Activated T-helper 1 cell treated with anti-CD3 and anti-CD28 coated beads, Interleukin-12 subunit alpha, Interleukin-12 subunit beta, Interleukin-2, Interleukin-4 antibody, amounts not matched to agents 30 ng/mL and 10 ng/mL and 1 ng/mL, durations not matched to agents 14 hours and 24 hours and 36 hours (primary cell): ENCODE measurements at regions of chr10 and their contacts with region 1.

Region 1: GRCh38 chr10:3623746-3624145 is 161.3 kb downstream of the KLF6 start:
- DNase-seq: no peak
- H3K4me3 Mint-ChIP-seq: no peak overlapping the region
- H3K27ac Mint-ChIP-seq: peak overlapping the region; percentile 89
- H3K4me1 Mint-ChIP-seq: peaks cover 35% of the 10 kb centered on the region
- H3K27me3 Mint-ChIP-seq: peaks cover 8% of the 10 kb centered on the region

Region 2: DNA sequence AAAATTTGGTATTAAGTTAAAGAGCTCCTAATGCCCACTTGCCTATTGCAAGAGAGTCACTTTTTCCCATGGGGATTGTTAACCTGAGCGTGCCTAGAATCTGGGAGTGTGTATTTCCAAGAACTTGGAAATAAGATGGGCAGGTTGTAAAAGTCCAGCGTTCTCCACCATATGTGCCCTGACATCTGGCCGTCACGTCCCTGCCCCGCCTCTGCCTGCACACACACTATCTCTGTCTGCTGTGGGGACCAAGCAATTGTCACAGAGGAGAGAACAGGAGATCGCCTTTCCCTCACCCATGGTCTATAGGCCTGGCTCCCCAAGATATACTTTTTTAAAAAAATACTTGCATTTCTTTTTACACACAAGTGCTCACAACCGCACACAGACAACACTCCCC is 952.9 kb before region 1 on chr10:
- intact Hi-C with region 1: no loop called
- DNase-seq: no peak
- H3K4me3 Mint-ChIP-seq: no peak overlapping the region
- H3K27ac Mint-ChIP-seq: no peak overlapping the region
- H3K4me1 Mint-ChIP-seq: no peaks in the 10 kb centered on the region
- H3K27me3 Mint-ChIP-seq: no peaks in the 10 kb centered on the region

Region 3: GRCh38 chr10:3197348-3198003 is 426.3 kb before region 1 on chr10:
- intact Hi-C with region 1: loop called (anchors 1 kb)
- DNase-seq: peak; percentile 76
- H3K4me3 Mint-ChIP-seq: peak overlapping the region; percentile 37
- H3K27ac Mint-ChIP-seq: peak overlapping the region; percentile 57
- H3K4me1 Mint-ChIP-seq: peaks cover 24% of the 10 kb centered on the region
- H3K27me3 Mint-ChIP-seq: peaks cover 82% of the 10 kb centered on the region

Region 4: DNA sequence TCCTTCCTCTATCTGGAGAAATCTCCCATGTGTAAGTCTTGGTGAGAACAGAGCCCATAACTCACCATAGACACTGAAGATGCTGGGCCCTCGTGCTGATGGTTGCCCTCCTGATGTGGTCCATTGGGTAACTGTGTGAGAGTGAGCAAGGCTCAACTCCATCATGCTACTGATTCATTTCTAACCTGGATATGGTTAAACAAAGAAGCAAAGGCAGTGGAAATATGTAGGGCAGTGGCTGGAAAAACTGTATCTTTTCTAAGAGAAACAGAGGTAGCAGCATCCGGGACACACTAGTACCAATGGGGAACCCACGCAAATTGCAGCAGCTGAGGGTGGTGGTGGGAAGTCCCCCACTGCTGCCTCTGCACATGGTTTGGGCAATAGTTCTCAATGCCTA is 60.4 kb before region 1 on chr10:
- intact Hi-C with region 1: loop called (anchors 1 kb)
- DNase-seq: no peak
- H3K4me3 Mint-ChIP-seq: no peak overlapping the region
- H3K27ac Mint-ChIP-seq: peak overlapping the region; percentile 49
- H3K4me1 Mint-ChIP-seq: peaks cover 28% of the 10 kb centered on the region
- H3K27me3 Mint-ChIP-seq: peaks cover 7% of the 10 kb centered on the region

Region 5: GRCh38 chr10:3740157-3740871 is 116.6 kb after region 1 on chr10:
- intact Hi-C with region 1: loop called (anchors 1 kb)
- DNase-seq: no peak
- H3K4me3 Mint-ChIP-seq: no peak overlapping the region
- H3K27ac Mint-ChIP-seq: peak overlapping the region; percentile 7
- H3K4me1 Mint-ChIP-seq: peaks cover 30% of the 10 kb centered on the region
- H3K27me3 Mint-ChIP-seq: no peaks in the 10 kb centered on the region

Region 6: GRCh38 chr10:3785257-3785850 is 161.6 kb after region 1 on chr10:
- intact Hi-C with region 1: loop called (anchors 1 kb)
- DNase-seq: peak; percentile 99
- H3K4me3 Mint-ChIP-seq: peak overlapping the region; percentile 93
- H3K27ac Mint-ChIP-seq: peak overlapping the region; percentile 96
- H3K4me1 Mint-ChIP-seq: peaks cover 49% of the 10 kb centered on the region
- H3K27me3 Mint-ChIP-seq: no peaks in the 10 kb centered on the region

Region 7: GRCh38 chr10:3867454-3868270 is 243.9 kb after region 1 on chr10:
- intact Hi-C with region 1: loop called (anchors 2 kb)
- DNase-seq: no peak
- H3K4me3 Mint-ChIP-seq: no peak overlapping the region
- H3K27ac Mint-ChIP-seq: peak overlapping the region; percentile 77
- H3K4me1 Mint-ChIP-seq: peaks cover 72% of the 10 kb centered on the region
- H3K27me3 Mint-ChIP-seq: no peaks in the 10 kb centered on the region

Region 8: DNA sequence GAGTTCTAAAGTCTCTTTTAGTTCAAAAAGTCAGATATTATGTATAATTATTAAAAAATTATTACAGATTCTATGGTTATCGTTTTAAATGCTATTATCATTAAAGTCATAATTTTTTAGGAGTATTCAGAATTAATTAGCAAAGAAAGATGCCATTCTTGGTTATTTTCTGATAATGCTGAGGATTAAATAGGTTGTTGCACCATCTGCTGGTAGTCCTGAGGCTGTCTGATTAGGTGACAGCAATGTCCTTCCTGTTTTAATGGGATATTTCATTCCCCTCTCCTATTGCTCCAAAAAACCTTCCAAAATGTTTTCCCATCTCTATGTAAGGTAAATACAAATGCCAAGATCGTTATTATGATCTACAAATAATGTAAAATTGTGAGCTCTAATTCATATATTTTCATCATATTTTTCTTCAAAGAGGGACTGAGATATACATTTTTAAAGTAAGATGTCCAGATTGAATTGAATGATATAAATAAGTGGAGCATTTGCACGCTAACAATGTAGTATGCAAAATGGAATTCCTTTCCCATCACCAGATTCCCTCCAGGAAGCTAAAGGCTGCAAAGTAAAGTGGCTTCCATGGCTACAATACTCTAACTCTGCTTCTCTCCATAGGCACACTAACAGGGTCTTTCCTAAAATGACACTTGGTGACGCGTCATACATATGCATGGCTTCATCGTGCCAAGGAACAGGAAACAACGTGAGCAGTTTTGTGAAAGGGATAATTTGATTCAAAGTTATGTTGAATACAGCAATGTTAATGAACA is 1143.5 kb after region 1 on chr10:
- intact Hi-C with region 1: loop called (anchors 10 kb)
- DNase-seq: no peak
- H3K4me3 Mint-ChIP-seq: no peak overlapping the region
- H3K27ac Mint-ChIP-seq: no peak overlapping the region
- H3K4me1 Mint-ChIP-seq: no peaks in the 10 kb centered on the region
- H3K27me3 Mint-ChIP-seq: peaks cover 24% of the 10 kb centered on the region